Adrenal gland (tissue), 19 donors: ENCODE measurements at regions of chr7 and their contacts with region 1.

Region 1: DNA sequence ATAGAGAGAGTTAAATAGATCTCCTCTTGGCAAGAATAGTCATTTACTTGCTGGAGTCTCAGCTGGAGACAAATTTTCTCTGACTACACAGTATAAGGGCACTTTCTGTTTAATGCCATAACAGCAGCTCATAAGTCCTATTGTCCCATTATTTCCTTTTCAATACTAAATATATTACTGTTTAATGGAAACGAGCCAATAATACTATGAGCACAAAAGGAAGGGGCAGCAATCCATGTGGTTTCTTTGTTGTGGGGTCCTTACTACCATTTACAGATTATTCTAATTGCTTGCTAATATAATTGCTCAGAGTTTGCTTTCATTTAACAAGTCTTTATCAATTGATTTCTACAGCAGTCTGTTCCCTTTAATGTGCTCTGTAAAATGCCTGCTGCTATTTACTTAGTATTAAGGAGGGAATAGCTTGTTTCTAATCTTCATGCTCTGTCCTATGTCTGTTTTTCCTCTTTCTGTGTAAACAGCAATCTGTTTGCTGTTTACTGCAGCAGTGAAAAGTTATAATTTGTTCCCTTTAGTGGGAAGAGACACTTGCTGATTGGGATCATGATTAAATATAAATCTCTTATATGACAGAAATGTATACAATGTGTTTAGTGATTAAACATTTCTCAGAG is 296.2 kb upstream of the SMIM30 start:
- DNase-seq: no peak
- H3K4me3 ChIP-seq: no peak overlapping the region
- H3K27ac ChIP-seq: no peak overlapping the region
- H3K4me1 ChIP-seq: no peaks in the 10 kb centered on the region
- H3K27me3 ChIP-seq: no peaks in the 10 kb centered on the region
- CTCF ChIP-seq: no peak
- POLR2A ChIP-seq: no peak

Region 2: DNA sequence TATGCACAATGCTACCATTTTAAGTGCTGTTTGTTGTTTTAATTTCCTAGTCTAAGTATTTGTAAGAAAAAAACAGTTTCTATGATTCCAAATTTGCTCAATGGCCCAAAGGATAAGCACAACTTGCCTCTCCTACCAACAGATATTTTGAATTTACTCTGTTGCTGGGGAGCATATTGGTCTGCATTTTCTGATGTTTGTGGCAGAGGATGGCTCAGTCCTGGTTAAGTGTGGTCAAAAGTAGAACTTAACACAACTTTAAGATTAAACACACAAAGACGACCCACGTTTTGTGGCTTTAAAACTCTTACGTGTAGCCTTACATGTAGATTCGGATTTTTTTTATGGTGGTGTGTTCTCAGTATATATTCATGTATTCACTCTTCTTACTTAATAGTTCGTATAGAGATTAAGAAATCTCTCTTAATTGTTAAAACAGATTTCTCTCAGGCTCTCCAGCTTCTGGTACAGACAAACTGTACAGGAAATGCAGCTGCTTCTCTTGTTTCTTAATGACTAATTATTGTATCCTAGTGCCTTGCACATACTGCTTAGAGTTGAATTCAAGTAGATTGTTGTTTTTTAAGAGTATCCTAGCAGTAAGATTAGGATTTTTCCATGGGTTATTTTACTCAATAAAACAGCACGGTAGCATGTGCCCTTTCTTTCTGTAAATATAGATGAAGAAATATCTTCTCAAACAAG is 414.1 kb before region 1 on chr7:
- intact Hi-C with region 1: loop called in 1 of 2 experiments (anchors 10 kb)
- DNase-seq: no peak
- H3K4me3 ChIP-seq: no peak overlapping the region
- H3K27ac ChIP-seq: no peak overlapping the region
- H3K4me1 ChIP-seq: no peaks in the 10 kb centered on the region
- H3K27me3 ChIP-seq: no peaks in the 10 kb centered on the region
- CTCF ChIP-seq: no peak
- POLR2A ChIP-seq: no peak

Region 3: GRCh38 chr7:113366122-113366521 is 48.4 kb before region 1 on chr7:
- intact Hi-C with region 1: no loop called
- DNase-seq: no peak
- H3K4me3 ChIP-seq: no peak overlapping the region
- H3K27ac ChIP-seq: no peak overlapping the region
- H3K4me1 ChIP-seq: no peaks in the 10 kb centered on the region
- H3K27me3 ChIP-seq: no peaks in the 10 kb centered on the region
- CTCF ChIP-seq: no peak
- POLR2A ChIP-seq: no peak